Naive thymus-derived CD4-positive, alpha-beta T cell (primary cell): ENCODE measurements at regions of chr1 and their contacts with region 1.

Region 1: GRCh38 chr1:208245185-208245705 is 1.1 kb upstream of the PLXNA2 start:
- DNase-seq: peak; percentile 36 to 67 (median 59)
- ATAC-seq: peak; percentile 77
- H3K4me3 ChIP-seq: peak overlapping the region; percentile 51
- H3K4me3 Mint-ChIP-seq: peak overlapping the region; percentile 75 to 92 (median 84)
- H3K27ac ChIP-seq: no peak overlapping the region
- H3K27ac Mint-ChIP-seq: peak overlapping the region in 5 of 9 donors; percentile 3 to 65 (median 37)
- H3K4me1 ChIP-seq: no peaks in the 10 kb centered on the region
- H3K4me1 Mint-ChIP-seq: peaks cover 6 to 17% (median 10%) of the 10 kb centered on the region in 7 donors
- H3K27me3 ChIP-seq: peaks cover 0 to 5% of the 10 kb centered on the region in 2 donors
- H3K27me3 Mint-ChIP-seq: peaks cover 13 to 58% (median 17%) of the 10 kb centered on the region in 5 donors

Region 2: GRCh38 chr1:208025031-208025430 is 220.2 kb before region 1 on chr1:
- CTCF ChIA-PET with region 1: interaction called, 68 read pairs
- POLR2A ChIA-PET with region 1: interaction called, 6 read pairs
- intact Hi-C with region 1: loop called (anchors 1 kb)
- DNase-seq: no peak
- ATAC-seq: no peak
- H3K4me3 ChIP-seq: no peak overlapping the region
- H3K4me3 Mint-ChIP-seq: no peak overlapping the region
- H3K27ac ChIP-seq: no peak overlapping the region
- H3K27ac Mint-ChIP-seq: no peak overlapping the region
- H3K4me1 ChIP-seq: no peaks in the 10 kb centered on the region
- H3K4me1 Mint-ChIP-seq: no peaks in the 10 kb centered on the region
- H3K27me3 ChIP-seq: no peaks in the 10 kb centered on the region
- H3K27me3 Mint-ChIP-seq: peaks cover 0 to 6% (median 0%) of the 10 kb centered on the region in 5 donors

Region 3: DNA sequence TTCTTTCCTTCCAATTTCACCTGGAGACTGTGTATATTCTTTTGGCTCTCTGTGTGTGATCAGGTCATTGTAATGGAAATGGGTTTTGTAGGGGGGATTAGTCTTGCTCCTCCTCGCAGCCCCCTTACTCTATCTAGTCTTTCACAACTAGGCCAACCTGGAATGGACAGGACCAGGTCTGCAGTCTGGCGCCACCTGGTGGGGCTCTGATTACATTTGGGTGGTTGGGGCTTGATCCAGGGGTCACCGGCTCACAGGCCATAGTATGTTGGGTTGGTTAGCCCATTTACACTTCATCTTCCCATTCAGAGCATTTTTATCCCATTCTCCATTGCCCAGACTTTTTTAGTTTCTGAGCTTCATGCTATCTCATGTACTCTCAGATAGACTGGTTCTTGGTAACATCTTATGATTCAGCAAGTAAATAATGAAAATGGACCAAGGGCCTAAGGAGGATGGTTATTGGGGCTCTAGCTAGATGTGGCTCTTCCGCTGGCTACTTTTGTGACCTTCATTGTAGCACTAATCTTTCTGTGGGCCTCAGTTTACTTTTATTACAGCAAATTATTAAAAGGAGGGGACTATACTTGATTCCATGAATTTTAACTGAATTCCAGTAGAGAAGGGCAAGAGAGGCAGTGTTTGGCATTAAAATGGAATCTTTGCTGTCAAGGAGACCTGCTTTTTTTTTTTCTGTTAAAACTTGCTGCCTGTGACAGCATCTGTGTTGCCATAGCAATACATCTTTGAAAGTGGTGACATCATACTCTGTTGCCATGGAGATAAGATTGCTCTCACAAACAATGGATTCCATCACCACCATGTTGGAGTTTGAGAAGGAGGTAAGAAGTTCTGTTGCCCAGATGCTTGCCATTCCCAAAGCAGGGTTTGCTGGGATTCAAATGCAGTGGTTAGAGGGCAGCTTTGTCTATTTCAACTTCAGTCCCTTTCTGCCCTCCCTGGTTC is 151.2 kb before region 1 on chr1:
- CTCF ChIA-PET with region 1: interaction called, 4 read pairs
- POLR2A ChIA-PET with region 1: no interaction called
- intact Hi-C with region 1: loop called in 1 of 2 experiments (anchors 2 kb)
- DNase-seq: peak; percentile 21 to 62 (median 49)
- ATAC-seq: peak; percentile 62
- H3K4me3 ChIP-seq: no peak overlapping the region
- H3K4me3 Mint-ChIP-seq: no peak overlapping the region
- H3K27ac ChIP-seq: no peak overlapping the region
- H3K27ac Mint-ChIP-seq: peak overlapping the region in 2 of 9 donors; percentile 4 to 54
- H3K4me1 ChIP-seq: no peaks in the 10 kb centered on the region
- H3K4me1 Mint-ChIP-seq: no peaks in the 10 kb centered on the region
- H3K27me3 ChIP-seq: no peaks in the 10 kb centered on the region
- H3K27me3 Mint-ChIP-seq: peaks cover 0 to 3% (median 0%) of the 10 kb centered on the region in 5 donors

Region 4: GRCh38 chr1:208132287-208132883 is 112.9 kb before region 1 on chr1:
- CTCF ChIA-PET with region 1: interaction called, 13 read pairs
- POLR2A ChIA-PET with region 1: no interaction called
- intact Hi-C with region 1: loop called (anchors 1 kb)
- DNase-seq: peak in 8 of 9 donors; percentile 3 to 63 (median 19)
- ATAC-seq: peak; percentile 74
- H3K4me3 ChIP-seq: no peak overlapping the region
- H3K4me3 Mint-ChIP-seq: peak overlapping the region in 4 of 10 donors; percentile 0 to 46 (median 24)
- H3K27ac ChIP-seq: no peak overlapping the region
- H3K27ac Mint-ChIP-seq: no peak overlapping the region
- H3K4me1 ChIP-seq: no peaks in the 10 kb centered on the region
- H3K4me1 Mint-ChIP-seq: peaks cover 0 to 8% (median 6%) of the 10 kb centered on the region in 7 donors
- H3K27me3 ChIP-seq: peaks cover 0 to 4% of the 10 kb centered on the region in 2 donors
- H3K27me3 Mint-ChIP-seq: peaks cover 10 to 27% (median 23%) of the 10 kb centered on the region in 5 donors

Region 5: DNA sequence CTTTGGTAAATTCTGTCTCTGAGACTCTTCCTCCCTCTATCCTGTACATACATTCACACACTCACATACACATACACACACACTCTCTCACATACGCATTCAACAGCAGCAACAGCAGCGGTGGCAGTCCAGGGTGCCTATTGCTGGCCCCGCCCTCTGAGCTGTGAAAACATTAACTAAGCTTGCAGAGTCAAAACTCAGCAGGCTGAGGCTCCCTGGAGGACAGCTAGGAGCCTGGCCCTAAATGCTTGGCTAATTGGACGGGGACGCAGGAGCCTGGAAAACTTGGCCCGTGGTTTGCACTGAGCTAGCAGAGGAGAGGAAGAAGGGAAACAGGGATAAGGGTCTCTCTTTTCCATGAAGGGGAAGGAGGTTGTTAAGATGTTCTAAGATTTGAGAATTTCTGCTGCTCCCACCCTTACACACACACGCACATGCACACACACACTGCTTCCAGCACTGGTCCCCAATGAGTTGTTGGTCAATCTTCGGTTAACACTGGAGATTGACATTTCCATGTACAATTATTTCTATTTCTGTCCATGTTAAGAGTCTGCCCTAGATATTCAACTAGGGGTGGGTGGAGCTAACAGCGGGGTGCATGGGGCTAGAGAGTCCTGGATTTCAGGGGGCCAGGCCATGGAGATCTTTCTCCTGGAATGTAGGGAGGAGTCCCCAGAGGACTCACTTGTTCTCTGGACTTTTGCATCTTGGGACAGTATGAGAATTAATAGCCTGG is 95.3 kb before region 1 on chr1:
- CTCF ChIA-PET with region 1: no interaction called
- POLR2A ChIA-PET with region 1: no interaction called
- intact Hi-C with region 1: no loop called
- DNase-seq: no peak
- ATAC-seq: no peak
- H3K4me3 ChIP-seq: no peak overlapping the region
- H3K4me3 Mint-ChIP-seq: no peak overlapping the region
- H3K27ac ChIP-seq: no peak overlapping the region
- H3K27ac Mint-ChIP-seq: no peak overlapping the region
- H3K4me1 ChIP-seq: no peaks in the 10 kb centered on the region
- H3K4me1 Mint-ChIP-seq: no peaks in the 10 kb centered on the region
- H3K27me3 ChIP-seq: no peaks in the 10 kb centered on the region
- H3K27me3 Mint-ChIP-seq: peaks cover 0 to 6% (median 5%) of the 10 kb centered on the region in 5 donors